ENCODE measurements at regions of chr5 and their contacts with region 1.

Region 1: GRCh38 chr5:168334695-168335094 is 43.2 kb downstream of the WWC1 start:
- DNase-seq: peak; percentile 64 to 81
- H3K4me3 ChIP-seq: peak overlapping the region in 1 of 4 experiments; percentile 31; a peak in 1 of 8 replicates
- H3K27ac ChIP-seq: peak overlapping the region; percentile 34; the same call in 1 of the 2 replicates
- H3K4me1 ChIP-seq: peaks cover 20 to 36% (median 29%) of the 10 kb centered on the region in 4 experiments
- H3K27me3 ChIP-seq: no peaks in the 10 kb centered on the region
- CTCF ChIP-seq: no peak
- EP300 ChIP-seq: peak in 1 of 2 experiments; percentile 52; a peak in 1 of 3 replicates
- POLR2A ChIP-seq: peak in 1 of 2 experiments; percentile 39; a peak in 1 of 3 replicates
- RAD21 ChIP-seq: no peak

Region 2: GRCh38 chr5:168365581-168366081 is 30.9 kb after region 1 on chr5:
- CTCF ChIA-PET with region 1: interaction called, 11 read pairs
- POLR2A ChIA-PET with region 1: no interaction called
- DNase-seq: peak in 1 of 2 experiments; percentile 67
- H3K4me3 ChIP-seq: no peak overlapping the region
- H3K27ac ChIP-seq: no peak overlapping the region
- H3K4me1 ChIP-seq: peaks cover 7 to 19% (median 13%) of the 10 kb centered on the region in 4 experiments
- H3K27me3 ChIP-seq: no peaks in the 10 kb centered on the region
- CTCF ChIP-seq: peak; percentile 37 to 54 (median 52); a peak in 3 of 4 replicates
- EP300 ChIP-seq: no peak
- POLR2A ChIP-seq: no peak
- RAD21 ChIP-seq: peak; percentile 42 to 47

Region 3: GRCh38 chr5:168428552-168428951 is 93.9 kb after region 1 on chr5:
- CTCF ChIA-PET with region 1: no interaction called
- POLR2A ChIA-PET with region 1: no interaction called
- DNase-seq: no peak
- H3K4me3 ChIP-seq: no peak overlapping the region
- H3K27ac ChIP-seq: no peak overlapping the region
- H3K4me1 ChIP-seq: no peaks in the 10 kb centered on the region
- H3K27me3 ChIP-seq: no peaks in the 10 kb centered on the region
- CTCF ChIP-seq: no peak
- EP300 ChIP-seq: no peak
- POLR2A ChIP-seq: no peak
- RAD21 ChIP-seq: no peak

Region 4: DNA sequence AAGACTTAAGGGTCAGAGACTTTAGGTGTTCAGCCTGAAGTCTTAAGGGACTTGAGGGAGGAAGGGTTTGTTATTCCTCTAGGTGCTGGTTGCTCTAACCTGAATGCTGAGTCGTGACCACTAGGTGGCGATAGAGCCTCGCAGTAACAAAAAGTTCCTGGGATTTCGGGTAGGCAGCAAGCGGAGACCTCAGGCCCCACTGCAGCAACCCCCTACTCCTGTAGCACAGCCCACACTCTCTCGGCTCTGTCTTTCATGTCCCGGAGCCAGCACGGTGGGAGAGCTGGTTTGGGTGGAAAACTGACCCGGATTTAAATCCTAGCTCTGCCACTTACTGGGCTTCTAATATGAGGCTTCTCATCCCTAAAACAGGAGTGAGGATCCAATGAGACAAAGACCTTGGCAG is 344.8 kb after region 1 on chr5:
- CTCF ChIA-PET with region 1: no interaction called
- POLR2A ChIA-PET with region 1: no interaction called
- DNase-seq: peak; percentile 77 to 92
- H3K4me3 ChIP-seq: no peak overlapping the region
- H3K27ac ChIP-seq: no peak overlapping the region
- H3K4me1 ChIP-seq: no peaks in the 10 kb centered on the region; a peak in 1 of 7 replicates
- H3K27me3 ChIP-seq: no peaks in the 10 kb centered on the region
- CTCF ChIP-seq: peak; percentile 58 to 96 (median 85)
- EP300 ChIP-seq: no peak
- POLR2A ChIP-seq: no peak
- RAD21 ChIP-seq: peak; percentile 96 to 97

Measured in H1 (cell line).